PC-9 (cell line): ENCODE measurements at regions of chr16 and their contacts with region 1.

Region 1: DNA sequence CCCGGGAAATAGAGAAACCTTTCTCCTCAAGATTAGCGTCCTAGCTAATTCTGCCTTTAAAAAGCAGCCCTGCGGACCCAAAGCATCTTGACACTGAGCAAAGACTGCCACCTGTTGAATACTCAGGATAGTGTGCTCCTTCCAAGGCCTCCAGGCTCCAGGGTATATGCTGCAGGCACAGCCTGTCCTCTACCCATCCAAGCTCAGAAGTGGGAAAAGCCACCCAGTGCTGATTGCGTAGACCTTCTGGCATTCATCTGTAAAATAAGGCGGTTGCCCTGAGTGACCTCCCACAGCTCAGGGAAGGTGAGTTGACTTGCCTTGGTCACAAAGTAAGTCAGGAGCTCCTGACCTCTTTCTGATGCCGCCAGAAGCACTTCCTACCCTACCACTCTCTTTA is 456.1 kb upstream of the DYNLRB2 start:
- DNase-seq: peak; percentile 23 to 52
- H3K4me3 ChIP-seq: no peak overlapping the region
- H3K27ac ChIP-seq: no peak overlapping the region
- H3K4me1 ChIP-seq: 0 out of 2 replicates have a peak, but pooled peaks cover 4% of the 10 kb centered on the region
- H3K27me3 ChIP-seq: no peaks in the 10 kb centered on the region; the same call in 1 of the 2 replicates
- CTCF ChIP-seq: peak; percentile 70

Region 2: DNA sequence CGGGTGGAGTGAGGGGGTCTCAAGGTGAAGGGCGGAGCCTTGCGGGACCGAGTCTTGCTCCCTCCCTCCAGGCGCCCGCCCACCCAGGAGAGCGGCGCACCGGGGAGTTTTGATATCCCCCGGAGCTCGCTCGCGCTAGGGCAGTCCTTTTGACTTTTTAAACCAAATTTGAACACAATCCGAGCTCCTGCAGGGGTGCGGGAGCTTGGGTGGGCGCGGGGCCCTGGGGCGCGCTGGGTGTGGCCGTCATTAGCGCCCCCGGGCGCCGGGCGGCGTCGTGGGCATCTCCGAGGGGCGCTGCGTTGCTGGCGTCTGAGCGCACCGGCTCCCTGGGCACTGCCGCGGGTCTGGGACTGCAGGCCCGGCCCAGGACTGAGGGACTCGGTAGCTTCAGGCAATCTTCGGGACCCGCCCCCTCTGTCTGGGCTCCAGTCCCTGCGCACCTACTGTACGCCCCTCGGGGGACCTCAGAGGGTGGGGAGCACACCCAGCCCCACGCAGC is 495.0 kb before region 1 on chr16:
- CTCF ChIA-PET with region 1: no interaction called
- POLR2A ChIA-PET with region 1: no interaction called
- intact Hi-C with region 1: loop called (anchors 10 kb)
- DNase-seq: no peak
- H3K4me3 ChIP-seq: no peak overlapping the region
- H3K27ac ChIP-seq: no peak overlapping the region
- H3K4me1 ChIP-seq: no peaks in the 10 kb centered on the region
- H3K27me3 ChIP-seq: peaks cover 83% of the 10 kb centered on the region
- CTCF ChIP-seq: no peak

Region 3: GRCh38 chr16:79997257-79997656 is 87.4 kb before region 1 on chr16:
- CTCF ChIA-PET with region 1: no interaction called
- POLR2A ChIA-PET with region 1: no interaction called
- intact Hi-C with region 1: loop called (anchors 5 kb)
- DNase-seq: no peak
- H3K4me3 ChIP-seq: no peak overlapping the region
- H3K27ac ChIP-seq: no peak overlapping the region
- H3K4me1 ChIP-seq: no peaks in the 10 kb centered on the region
- H3K27me3 ChIP-seq: no peaks in the 10 kb centered on the region
- CTCF ChIP-seq: peak; percentile 57